ENCODE measurements at regions of chr2 and their contacts with region 1.

Region 1: GRCh38 chr2:102005989-102006885 is 14.5 kb downstream of the IL1R2 start:
- DNase-seq: peak; percentile 51
- H3K4me3 Mint-ChIP-seq: peak overlapping the region; percentile 33
- H3K27ac Mint-ChIP-seq: no peak overlapping the region
- H3K4me1 Mint-ChIP-seq: peaks cover 21% of the 10 kb centered on the region
- H3K27me3 Mint-ChIP-seq: peaks cover 1% of the 10 kb centered on the region

Region 2: DNA sequence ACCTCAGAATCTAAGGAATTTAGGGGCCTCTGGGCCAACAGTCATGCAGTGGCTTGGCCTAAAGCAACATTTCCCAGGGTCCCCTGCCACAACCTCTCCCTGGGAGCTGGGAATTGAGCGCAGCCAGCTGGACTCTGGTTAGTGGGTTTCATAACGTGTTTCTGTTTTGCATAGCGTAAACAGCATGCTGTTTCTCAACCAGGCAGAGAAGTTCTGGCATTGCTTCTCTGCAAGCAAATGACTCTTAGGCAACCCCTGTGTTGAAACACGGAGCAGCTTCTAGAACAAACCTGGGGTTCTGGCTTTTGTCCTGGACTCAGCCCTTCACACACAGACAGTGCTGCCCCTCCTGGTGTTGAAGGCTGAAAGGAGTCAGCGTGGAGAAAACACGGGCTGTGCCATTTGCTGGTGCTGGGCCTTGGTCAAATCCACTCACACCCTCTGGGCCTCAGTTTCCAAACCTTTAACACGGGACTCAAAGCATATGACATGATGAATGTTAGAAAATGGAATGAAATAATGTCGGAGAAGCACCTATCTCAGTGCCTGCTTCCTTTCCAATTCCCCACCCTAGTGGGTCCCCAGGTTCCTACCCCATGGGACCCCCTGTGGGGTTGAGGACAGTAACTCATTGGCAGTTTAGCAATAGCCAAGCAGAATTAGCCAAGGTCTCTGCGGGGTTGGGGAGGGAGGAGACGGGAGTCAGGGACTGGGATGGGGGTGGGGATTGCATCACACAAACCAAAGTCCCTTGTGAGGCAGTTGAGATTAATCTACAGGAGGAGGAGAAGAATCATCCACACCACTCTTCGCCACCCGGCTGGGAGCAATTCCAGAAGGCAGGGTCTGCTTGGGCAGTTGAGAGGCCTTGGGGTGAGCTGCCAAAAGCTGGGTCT is 44.7 kb before region 1 on chr2:
- CTCF ChIA-PET with region 1: no interaction called
- POLR2A ChIA-PET with region 1: no interaction called
- intact Hi-C with region 1: no loop called
- DNase-seq: no peak
- H3K4me3 Mint-ChIP-seq: no peak overlapping the region
- H3K27ac Mint-ChIP-seq: no peak overlapping the region
- H3K4me1 Mint-ChIP-seq: peaks cover 4% of the 10 kb centered on the region
- H3K27me3 Mint-ChIP-seq: no peaks in the 10 kb centered on the region

Region 3: GRCh38 chr2:102166189-102166845 is 160.1 kb after region 1 on chr2:
- CTCF ChIA-PET with region 1: interaction called, 14 read pairs
- POLR2A ChIA-PET with region 1: no interaction called
- intact Hi-C with region 1: no loop called
- DNase-seq: no peak
- H3K4me3 Mint-ChIP-seq: no peak overlapping the region
- H3K27ac Mint-ChIP-seq: no peak overlapping the region
- H3K4me1 Mint-ChIP-seq: peaks cover 5% of the 10 kb centered on the region
- H3K27me3 Mint-ChIP-seq: no peaks in the 10 kb centered on the region

Region 4: DNA sequence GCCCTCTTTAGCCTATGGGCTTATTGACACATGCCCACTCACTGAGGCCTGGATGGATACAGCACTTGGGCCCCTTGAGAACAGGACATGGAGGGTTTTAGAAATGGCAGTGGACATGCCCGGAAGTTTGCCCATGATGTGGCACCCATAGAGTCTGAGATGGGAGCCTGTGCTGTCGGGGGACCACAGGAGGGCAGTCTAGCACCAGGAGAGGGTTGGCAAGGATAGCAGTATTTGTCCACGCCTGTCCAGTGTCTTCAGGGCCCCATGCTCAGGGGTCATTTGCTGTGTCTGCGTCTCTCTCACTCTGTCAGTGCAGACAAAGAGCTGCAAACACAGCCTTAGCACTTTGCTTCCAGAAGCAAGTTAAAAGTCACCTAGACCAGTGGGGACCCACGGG is 229.3 kb after region 1 on chr2:
- CTCF ChIA-PET with region 1: interaction called, 148 read pairs
- POLR2A ChIA-PET with region 1: interaction called, 14 read pairs
- intact Hi-C with region 1: no loop called
- DNase-seq: peak; percentile 56
- H3K4me3 Mint-ChIP-seq: no peak overlapping the region
- H3K27ac Mint-ChIP-seq: peak overlapping the region; percentile 61
- H3K4me1 Mint-ChIP-seq: peaks cover 58% of the 10 kb centered on the region
- H3K27me3 Mint-ChIP-seq: peaks cover 2% of the 10 kb centered on the region